ENCODE measurements at regions of chr3 and their contacts with region 1.

Region 1: DNA sequence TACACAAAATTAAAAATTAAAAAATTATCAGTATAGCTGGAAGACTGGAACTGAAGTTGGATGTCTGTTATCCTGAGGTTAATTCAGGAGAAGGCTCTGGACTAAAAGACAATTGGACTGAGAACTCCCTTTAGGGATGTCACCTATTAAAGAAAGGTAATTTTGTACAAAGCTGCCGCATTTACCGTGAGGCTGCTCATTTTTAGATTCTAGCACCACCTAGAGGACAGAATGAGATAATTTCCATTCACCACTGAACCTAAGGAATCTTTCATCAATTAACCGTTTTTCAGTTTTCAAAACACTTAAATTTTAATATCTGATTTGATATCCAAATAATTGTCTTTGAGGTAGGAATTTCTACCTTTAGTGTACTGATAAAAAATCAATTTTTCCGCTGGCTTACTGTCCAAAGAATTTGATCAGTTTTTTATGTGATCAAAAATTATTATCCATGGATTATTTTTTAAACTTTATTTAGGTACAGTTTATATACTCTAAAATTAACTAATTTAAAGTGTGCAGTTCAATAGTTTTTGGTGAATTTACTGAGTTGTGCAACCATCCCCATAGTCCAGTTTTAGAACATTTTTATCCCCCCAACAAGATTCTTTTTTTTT is 106.7 kb upstream of the TNIK start:
- DNase-seq: peak; percentile 42 to 59 (median 50)
- H3K4me3 ChIP-seq: no peak overlapping the region
- H3K27ac ChIP-seq: no peak overlapping the region
- H3K4me1 ChIP-seq: peaks cover 0 to 5% (median 2%) of the 10 kb centered on the region in 4 experiments
- H3K27me3 ChIP-seq: no peaks in the 10 kb centered on the region

Region 2: DNA sequence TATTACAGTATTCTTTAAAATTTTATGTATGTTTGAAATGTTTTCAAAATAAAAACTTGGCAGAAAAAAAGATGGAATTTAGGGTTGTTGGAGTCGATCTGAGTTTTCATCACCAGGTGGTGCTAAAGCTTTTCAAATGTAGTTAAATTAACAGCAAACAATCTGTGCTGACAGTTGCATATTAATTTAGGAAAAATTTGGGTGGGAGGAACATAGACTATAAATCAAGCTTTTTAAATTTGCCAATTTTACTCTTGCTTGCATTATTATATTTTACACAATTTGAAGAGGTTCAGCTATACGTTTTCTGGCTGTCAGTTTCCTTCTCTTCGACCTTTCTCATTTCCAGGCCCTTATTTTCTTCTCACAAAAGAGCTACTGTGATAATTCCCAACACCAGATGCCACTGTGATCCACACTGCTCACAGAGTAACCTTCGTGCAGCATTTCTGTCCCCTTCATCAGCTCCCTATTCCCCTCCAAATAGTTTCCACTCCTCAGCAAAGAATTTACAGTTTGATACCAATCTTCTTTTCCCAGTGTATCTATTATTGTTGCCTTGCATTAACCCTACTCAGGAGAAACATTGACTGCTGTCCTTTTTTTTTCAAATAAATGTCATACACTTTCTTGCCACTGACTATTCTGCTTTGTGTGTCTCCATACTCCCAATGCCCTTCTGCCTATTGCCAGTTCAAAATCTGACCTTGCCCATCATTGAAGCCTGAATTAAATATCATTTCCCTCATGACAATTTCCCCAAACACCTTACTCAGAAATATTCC is 605.1 kb before region 1 on chr3:
- CTCF ChIA-PET with region 1: interaction called, 10 read pairs
- POLR2A ChIA-PET with region 1: no interaction called
- DNase-seq: peak; percentile 29 to 63 (median 47)
- H3K4me3 ChIP-seq: no peak overlapping the region
- H3K27ac ChIP-seq: no peak overlapping the region
- H3K4me1 ChIP-seq: no peaks in the 10 kb centered on the region
- H3K27me3 ChIP-seq: no peaks in the 10 kb centered on the region

Region 3: DNA sequence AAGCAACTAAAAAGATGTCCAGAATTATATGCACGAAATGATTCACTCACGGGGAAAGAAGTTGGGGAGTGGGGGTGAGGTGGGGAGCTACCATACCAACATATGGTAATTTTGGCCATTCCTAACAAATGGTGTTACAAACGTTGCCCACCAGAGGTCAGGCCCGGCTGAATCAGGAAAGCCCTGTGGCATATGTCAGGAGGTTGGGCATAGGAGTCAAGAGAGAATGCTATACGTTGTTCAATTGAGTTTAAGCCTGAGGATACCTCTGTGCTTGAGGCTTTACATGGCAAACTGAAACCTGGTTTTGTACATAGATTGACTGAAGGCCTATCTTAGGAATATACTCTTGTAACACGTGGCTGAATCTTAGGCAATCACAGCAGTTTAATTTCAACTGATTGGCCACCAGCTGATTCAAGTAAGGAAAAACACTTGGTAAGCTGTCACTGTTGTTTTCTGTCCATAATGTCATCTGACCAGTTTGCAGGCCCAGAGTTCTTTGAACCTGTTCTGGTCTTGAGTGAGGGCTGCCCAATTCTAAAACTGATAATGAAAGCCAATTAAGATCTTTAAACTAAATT is 517.0 kb before region 1 on chr3:
- CTCF ChIA-PET with region 1: interaction called, 35 read pairs
- POLR2A ChIA-PET with region 1: no interaction called
- DNase-seq: peak; percentile 54 to 79 (median 77)
- H3K4me3 ChIP-seq: no peak overlapping the region
- H3K27ac ChIP-seq: no peak overlapping the region
- H3K4me1 ChIP-seq: no peaks in the 10 kb centered on the region
- H3K27me3 ChIP-seq: no peaks in the 10 kb centered on the region

Region 4: DNA sequence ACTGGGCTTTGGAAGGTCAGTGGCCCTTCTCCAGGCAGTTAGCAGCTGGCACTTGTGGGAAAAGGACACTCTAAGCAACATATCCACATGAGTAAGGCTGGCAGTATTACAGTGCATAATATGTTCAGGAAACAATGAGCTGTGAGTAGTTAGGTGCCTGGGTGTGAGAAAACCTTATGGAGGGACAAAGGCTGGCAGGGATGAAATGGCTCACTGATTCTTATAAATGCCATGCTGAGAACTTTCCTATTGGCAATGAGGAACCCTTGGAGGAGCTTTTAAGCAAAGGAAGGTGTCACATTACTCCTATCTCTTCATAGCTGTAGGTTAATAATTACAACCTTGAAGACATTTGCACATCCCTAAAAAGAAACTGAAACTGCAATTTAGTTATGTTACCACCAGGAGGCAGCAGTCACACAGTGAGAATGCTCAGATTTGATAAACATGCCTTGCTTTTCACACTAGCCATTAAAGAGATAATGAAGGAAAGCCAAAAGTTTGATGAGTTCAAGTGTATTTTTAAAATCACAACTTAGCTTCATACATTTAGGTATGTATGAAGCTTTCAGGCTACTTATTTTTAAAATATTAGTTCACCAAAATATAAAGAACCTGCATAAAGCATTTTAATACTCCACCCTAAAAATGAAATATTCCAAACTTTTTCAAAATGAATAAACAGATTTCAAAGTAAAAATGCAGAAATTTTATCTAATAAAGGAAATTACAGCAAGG is 403.8 kb before region 1 on chr3:
- CTCF ChIA-PET with region 1: interaction called, 10 read pairs
- POLR2A ChIA-PET with region 1: no interaction called
- DNase-seq: peak in 2 of 3 donors; percentile 27 to 56
- H3K4me3 ChIP-seq: no peak overlapping the region
- H3K27ac ChIP-seq: no peak overlapping the region
- H3K4me1 ChIP-seq: peaks cover 0 to 6% (median 0%) of the 10 kb centered on the region in 4 experiments
- H3K27me3 ChIP-seq: no peaks in the 10 kb centered on the region

Region 5: GRCh38 chr3:171187706-171188290 is 379.1 kb before region 1 on chr3:
- CTCF ChIA-PET with region 1: interaction called, 17 read pairs
- POLR2A ChIA-PET with region 1: no interaction called
- DNase-seq: peak; percentile 34 to 60 (median 49)
- H3K4me3 ChIP-seq: no peak overlapping the region
- H3K27ac ChIP-seq: no peak overlapping the region
- H3K4me1 ChIP-seq: peaks cover 2 to 33% (median 4%) of the 10 kb centered on the region in 4 experiments
- H3K27me3 ChIP-seq: no peaks in the 10 kb centered on the region

Region 6: GRCh38 chr3:171532294-171532693 is 34.6 kb before region 1 on chr3:
- CTCF ChIA-PET with region 1: no interaction called
- POLR2A ChIA-PET with region 1: no interaction called
- DNase-seq: no peak
- H3K4me3 ChIP-seq: no peak overlapping the region
- H3K27ac ChIP-seq: no peak overlapping the region
- H3K4me1 ChIP-seq: no peaks in the 10 kb centered on the region
- H3K27me3 ChIP-seq: no peaks in the 10 kb centered on the region

Measured in common myeloid progenitor, CD34-positive (primary cell).